Heart left ventricle (tissue), 16 donors: ENCODE measurements at regions of chr5 and their contacts with region 1.

Region 1: DNA sequence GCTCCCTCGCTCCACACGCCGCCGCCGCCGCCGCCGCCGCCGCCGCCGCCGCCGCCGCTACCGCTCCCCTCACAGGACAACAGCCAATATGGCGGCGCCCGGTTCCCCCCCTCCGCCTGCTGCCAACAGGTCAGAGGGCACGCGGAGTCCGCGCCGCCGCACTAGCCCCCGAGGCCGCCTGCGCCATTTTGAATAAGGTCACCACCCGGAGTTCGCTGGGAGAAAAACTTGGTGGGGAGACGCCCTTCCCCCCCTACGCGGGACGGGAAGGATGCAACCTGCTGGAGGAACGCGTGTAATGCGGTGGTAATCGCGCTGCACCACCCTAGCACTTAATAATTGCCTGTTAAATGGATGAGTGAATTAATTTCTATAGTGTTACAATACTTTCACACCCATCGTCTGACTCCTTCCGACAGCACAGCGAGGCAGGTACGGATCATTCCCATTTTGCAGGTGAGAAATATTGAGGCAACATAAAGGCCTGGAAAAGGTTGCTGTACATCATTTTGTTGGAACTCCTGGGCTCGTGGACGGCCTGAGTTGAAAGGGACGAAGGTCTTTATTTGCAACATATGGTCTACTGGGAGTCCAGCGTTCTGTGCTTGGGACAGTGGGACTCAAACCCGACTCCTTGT is at the start of gene FAM193B:
- DNase-seq: peak; percentile 93 to 98 (median 95)
- ATAC-seq: peak; percentile 94 to 98 (median 96)
- H3K4me3 ChIP-seq: peak within 1 kb of the TSS; percentile 61 to 99 (median 94)
- H3K27ac ChIP-seq: peak within 1 kb of the TSS; percentile 58 to 89 (median 82)
- H3K4me1 ChIP-seq: peaks cover 3 to 43% (median 26%) of the 10 kb centered on the region in 12 donors
- H3K27me3 ChIP-seq: no peaks in the 10 kb centered on the region
- CTCF ChIP-seq: peak in 7 of 12 donors; percentile 8 to 43 (median 32)
- POLR2A ChIP-seq: peak in 1 of 2 donors; percentile 31
- total RNA-seq, gene FAM193B: 13.1 to 34.4 (median 20.2) TPM

Region 2: GRCh38 chr5:177516604-177517568 is 37.7 kb before region 1 on chr5 and contains the start of gene DDX41:
- intact Hi-C with region 1: loop called in 1 of 10 experiments (anchors 5 kb)
- DNase-seq: peak; percentile 97 to 99 (median 98)
- ATAC-seq: peak; percentile 91 to 95 (median 92)
- H3K4me3 ChIP-seq: peak within 1 kb of the TSS; percentile 61 to 100 (median 88)
- H3K27ac ChIP-seq: peak within 1 kb of the TSS; percentile 79 to 94 (median 89)
- H3K4me1 ChIP-seq: peaks cover 0 to 33% (median 15%) of the 10 kb centered on the region in 12 donors
- H3K27me3 ChIP-seq: no peaks in the 10 kb centered on the region
- CTCF ChIP-seq: peak in 4 of 12 donors; percentile 8 to 20 (median 13)
- POLR2A ChIP-seq: peak in 1 of 2 donors; percentile 66
- total RNA-seq, gene DDX41: 24.4 to 53.8 (median 37.7) TPM